GM10248 (cell line): ENCODE measurements at regions of chr12 and their contacts with region 1.

Region 1: DNA sequence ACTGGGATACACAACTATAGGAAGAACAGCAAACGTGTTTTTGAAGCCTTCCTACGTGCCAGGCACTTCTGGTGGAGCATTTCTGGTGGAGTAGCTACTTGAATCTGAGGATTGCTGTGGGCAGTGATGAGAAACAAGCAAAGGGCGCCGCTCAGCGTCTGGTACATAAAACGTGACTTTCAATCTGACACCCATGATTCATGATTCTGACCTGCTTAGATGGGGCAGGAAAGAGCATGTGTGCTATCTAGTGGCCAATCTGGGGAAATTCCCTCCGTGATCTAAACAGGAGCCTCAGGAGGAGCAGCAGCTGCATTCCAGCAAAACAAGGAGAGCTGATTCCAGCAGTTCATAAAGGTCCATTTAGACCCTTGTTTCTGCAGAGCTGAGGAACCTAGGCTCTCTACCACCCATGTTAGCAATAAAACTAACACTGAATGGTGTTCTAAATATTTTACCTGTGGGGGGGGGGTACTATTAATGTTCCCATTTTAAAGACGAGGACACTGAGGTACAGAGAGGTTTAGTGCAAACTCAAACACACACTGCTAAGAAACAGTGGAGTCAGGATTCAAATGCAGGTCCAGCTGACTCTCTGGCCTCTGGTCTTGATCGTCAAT is 37.8 kb downstream of the PAH start:
- DNase-seq: peak; percentile 45
- CTCF ChIP-seq: peak; percentile 62

Region 2: GRCh38 chr12:102757154-102757881 is 121.9 kb before region 1 on chr12:
- CTCF ChIA-PET with region 1: no interaction called
- POLR2A ChIA-PET with region 1: no interaction called
- DNase-seq: no peak
- CTCF ChIP-seq: no peak

Region 3: DNA sequence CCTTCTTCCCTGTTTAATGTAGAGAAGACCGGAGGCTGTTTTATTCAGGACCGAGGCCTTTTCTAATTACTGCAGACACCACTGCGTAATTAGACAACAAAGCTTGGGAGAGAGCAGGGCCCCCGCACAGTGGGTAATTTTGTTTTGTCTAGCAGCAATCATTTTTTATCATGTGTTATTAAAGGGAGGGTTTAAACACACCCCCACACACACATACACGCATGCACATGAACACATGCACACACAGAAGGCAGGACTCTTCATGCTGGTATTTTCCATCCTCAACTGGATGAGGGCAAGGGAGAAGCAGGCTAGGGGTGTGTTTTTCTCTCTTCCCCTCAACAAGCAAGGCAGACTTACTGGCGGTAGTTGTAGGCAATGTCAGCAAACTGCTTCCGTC is 13.0 kb before region 1 on chr12:
- CTCF ChIA-PET with region 1: interaction called, 23 read pairs
- POLR2A ChIA-PET with region 1: no interaction called
- DNase-seq: no peak
- CTCF ChIP-seq: no peak

Region 4: GRCh38 chr12:102913453-102914226 is 34.4 kb after region 1 on chr12:
- CTCF ChIA-PET with region 1: interaction called, 14 read pairs
- POLR2A ChIA-PET with region 1: no interaction called
- DNase-seq: no peak
- CTCF ChIP-seq: no peak

Region 5: GRCh38 chr12:103012884-103013283 is 133.6 kb after region 1 on chr12:
- CTCF ChIA-PET with region 1: no interaction called
- POLR2A ChIA-PET with region 1: no interaction called
- DNase-seq: no peak
- CTCF ChIP-seq: no peak

Region 6: DNA sequence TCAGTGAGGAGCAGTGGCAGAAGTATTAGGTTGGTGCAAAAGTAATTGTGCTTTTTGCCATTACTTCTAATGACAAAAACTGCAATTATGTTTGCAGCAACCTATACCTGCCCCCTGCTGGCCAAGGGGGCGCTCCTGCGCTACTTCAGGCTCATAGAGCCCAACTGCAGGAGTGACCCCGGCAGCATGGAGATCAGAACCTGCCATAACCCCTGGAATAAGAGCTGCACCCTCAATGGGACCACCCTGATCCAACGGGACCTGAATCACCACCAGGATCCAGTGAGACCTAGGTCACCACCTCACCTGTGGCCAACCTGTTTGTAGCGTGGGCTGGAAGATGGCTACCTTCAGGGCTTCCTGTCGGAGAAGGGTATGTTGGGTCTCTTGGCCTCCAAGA is 624.7 kb after region 1 on chr12:
- CTCF ChIA-PET with region 1: interaction called, 12 read pairs
- POLR2A ChIA-PET with region 1: no interaction called
- DNase-seq: peak; percentile 51
- CTCF ChIP-seq: peak; percentile 72

Region 7: DNA sequence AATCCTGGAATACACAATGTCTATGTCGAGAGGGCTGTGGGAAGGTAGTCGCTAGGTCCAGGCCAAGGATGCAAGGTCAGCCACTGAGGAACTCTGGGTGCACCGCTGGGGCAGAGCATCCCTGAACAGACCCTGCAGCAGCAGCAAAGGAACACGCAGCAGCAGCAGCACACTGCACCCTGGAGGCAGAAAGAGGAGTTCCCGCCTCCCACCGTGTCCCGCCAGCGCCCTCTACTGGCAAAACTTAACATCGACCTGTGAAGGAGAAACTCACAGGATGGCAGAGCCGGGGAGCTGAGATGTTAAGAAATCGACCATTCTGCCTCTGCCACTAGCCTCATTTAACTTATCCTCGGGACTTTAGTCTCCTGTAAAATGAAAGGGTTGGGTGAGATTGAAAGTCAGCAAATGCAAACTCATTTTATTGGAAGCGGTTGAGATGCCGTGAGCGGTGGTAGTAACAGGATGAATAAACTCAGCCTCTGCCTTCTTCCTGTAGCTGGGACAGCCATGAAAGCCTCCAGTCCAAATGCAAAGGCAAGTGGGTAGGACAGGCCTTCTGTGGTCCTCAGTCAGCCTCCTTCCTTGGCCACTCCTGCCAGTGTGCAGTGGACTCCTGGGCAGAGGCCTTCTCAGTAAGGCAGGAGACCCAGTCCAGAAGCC is 753.4 kb after region 1 on chr12:
- CTCF ChIA-PET with region 1: interaction called, 33 read pairs
- POLR2A ChIA-PET with region 1: no interaction called
- DNase-seq: peak; percentile 87
- CTCF ChIP-seq: peak; percentile 98